Calu3 (cell line): ENCODE measurements at regions of chr15 and their contacts with region 1.

Region 1: GRCh38 chr15:76330080-76330680 is 6.4 kb upstream of the ISL2 start:
- DNase-seq: peak; percentile 70
- H3K4me3 Mint-ChIP-seq: no peak overlapping the region
- H3K27ac Mint-ChIP-seq: no peak overlapping the region
- H3K4me1 Mint-ChIP-seq: peaks cover 21% of the 10 kb centered on the region
- H3K27me3 Mint-ChIP-seq: no peaks in the 10 kb centered on the region
- CTCF ChIP-seq: peak; percentile 57

Region 2: DNA sequence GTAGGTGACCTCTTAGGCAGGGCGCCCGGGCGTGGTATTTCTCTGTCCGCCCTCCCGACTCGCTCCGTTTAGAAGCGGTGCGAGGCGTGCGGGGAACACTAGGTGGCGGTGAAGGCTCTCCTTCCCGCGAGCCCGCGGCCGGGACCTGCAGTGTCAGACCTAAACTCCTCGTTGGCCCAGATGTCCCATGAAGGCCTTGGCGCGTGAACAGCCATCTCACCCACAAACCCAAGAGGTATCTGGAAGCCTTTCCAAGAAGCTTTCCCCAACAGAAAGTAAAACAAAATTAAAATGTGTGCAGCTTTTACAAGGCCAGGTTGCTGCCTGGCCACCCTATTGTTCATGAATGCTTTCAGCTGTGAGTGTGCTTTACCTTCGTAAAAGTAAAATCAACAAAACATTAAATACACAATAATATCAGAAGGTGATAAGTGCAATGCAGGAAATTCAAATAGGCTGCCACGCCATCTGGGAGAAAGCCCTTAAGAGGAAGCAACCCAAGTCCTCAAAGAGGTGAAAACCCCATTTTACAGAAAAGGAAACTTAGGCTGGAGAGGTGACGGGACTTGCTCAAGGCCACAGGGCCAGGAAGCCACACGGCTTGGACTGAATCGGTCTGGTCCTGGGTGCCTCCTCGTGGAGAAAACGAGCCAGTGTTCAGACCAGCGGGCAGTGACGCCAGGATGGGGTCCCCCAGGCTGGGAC is 139.2 kb before region 1 on chr15:
- CTCF ChIA-PET with region 1: interaction called, 5 read pairs
- intact Hi-C with region 1: loop called (anchors 2 kb)
- DNase-seq: peak; percentile 88
- H3K4me3 Mint-ChIP-seq: peak overlapping the region; percentile 39
- H3K27ac Mint-ChIP-seq: peak overlapping the region; percentile 10
- H3K4me1 Mint-ChIP-seq: peaks cover 19% of the 10 kb centered on the region
- H3K27me3 Mint-ChIP-seq: peaks cover 23% of the 10 kb centered on the region
- CTCF ChIP-seq: peak; percentile 87

Region 3: DNA sequence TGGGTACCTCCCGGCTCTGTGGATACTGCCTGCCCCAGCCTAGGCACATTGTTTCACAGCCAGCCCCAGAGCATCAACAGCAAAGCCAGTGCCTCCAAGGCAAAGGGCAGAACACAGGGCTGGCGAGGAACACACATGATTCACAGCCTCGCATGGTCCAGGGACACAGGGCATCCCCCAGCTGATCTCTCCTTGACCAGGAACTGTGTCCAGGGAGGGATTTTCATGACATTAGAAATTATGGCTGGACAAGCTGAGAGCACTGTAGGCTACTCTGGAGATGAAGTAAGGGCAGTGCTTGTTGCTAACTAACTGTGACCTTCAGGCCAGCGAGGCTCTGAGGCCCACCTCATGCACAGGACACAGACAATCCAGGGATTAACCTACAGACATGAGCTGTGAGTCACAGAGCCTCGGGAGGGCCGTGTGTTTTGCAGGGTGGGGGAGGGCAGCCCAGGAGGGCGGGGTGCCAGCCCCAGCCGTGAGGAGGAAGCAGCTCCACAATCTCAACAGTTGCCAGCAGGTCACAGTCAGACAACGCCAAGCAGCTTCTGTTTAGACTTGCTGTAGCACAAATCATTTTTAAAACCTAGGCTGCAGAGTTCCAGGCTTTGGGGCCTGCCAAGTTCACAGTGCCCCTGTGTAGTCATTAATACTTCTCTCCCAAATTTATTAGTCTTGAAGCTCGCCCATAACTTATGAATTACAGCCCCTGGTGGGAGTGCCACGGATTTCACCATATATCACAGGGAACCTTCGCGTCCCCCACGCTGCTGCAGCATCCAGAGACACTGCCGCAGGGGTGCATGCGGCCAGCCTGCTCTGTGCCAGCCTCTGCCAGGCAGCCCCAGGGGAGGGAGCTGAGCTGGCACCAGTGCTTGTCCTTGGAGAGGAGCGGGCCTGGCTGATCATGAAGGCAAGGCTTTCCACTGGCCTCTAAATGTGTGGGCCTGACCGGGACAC is 133.6 kb before region 1 on chr15:
- CTCF ChIA-PET with region 1: interaction called, 12 read pairs
- intact Hi-C with region 1: loop called (anchors 2 kb)
- DNase-seq: peak; percentile 72
- H3K4me3 Mint-ChIP-seq: peak overlapping the region; percentile 20
- H3K27ac Mint-ChIP-seq: no peak overlapping the region
- H3K4me1 Mint-ChIP-seq: peaks cover 44% of the 10 kb centered on the region
- H3K27me3 Mint-ChIP-seq: no peaks in the 10 kb centered on the region
- CTCF ChIP-seq: no peak

Region 4: DNA sequence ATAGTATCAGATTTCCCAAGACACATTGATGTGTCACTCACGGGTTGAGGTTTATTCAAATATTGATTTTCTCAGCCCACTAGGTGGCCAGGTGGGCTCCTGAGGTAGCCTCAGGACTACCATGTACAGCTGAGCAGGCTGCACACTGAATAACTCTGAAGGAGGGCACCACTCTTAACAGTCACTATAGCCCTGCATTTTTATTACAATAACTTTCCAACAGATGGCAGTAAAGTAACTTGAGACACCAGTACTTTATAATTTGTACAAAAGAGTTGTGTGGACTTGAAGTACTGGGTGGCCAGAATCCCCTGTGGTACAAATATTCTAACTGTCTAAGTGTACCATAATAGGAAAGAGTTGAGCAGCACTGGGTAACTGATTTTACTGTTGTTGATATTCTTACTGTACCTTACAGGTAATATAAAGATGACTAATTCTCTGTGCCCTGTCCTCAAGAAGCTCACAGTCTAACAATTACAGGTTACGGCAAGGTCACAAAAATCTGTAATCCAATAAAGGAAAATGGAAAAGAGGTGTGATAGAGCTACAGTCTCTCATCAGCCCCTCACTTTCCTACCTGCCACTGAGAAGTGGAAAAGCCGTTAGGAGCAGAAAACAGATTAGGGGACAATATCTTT is 94.9 kb before region 1 on chr15:
- CTCF ChIA-PET with region 1: interaction called, 5 read pairs
- intact Hi-C with region 1: loop called (anchors 1 kb)
- DNase-seq: no peak
- H3K4me3 Mint-ChIP-seq: no peak overlapping the region
- H3K27ac Mint-ChIP-seq: no peak overlapping the region
- H3K4me1 Mint-ChIP-seq: no peaks in the 10 kb centered on the region
- H3K27me3 Mint-ChIP-seq: no peaks in the 10 kb centered on the region
- CTCF ChIP-seq: peak; percentile 9